Activated CD4-positive, alpha-beta memory T cell treated with anti-CD3 and anti-CD28 coated beads, Interleukin-2, amount 10 ng/mL, durations not matched to agents 7 days and 5 days (primary cell): ENCODE measurements at regions of chr13 and their contacts with region 1.

Region 1: GRCh38 chr13:46160471-46161066 is 21.4 kb downstream of the LCP1 start:
- DNase-seq: no peak
- H3K4me3 Mint-ChIP-seq: peak overlapping the region; percentile 50
- H3K27ac Mint-ChIP-seq: peak overlapping the region; percentile 80
- H3K4me1 Mint-ChIP-seq: peaks cover 70% of the 10 kb centered on the region
- H3K27me3 Mint-ChIP-seq: no peaks in the 10 kb centered on the region

Region 2: GRCh38 chr13:46143184-46143701 is 17.3 kb before region 1 on chr13:
- CTCF ChIA-PET with region 1: interaction called, 13 read pairs
- POLR2A ChIA-PET with region 1: interaction called, 68 read pairs
- DNase-seq: no peak
- H3K4me3 Mint-ChIP-seq: no peak overlapping the region
- H3K27ac Mint-ChIP-seq: peak overlapping the region; percentile 31
- H3K4me1 Mint-ChIP-seq: peaks cover 16% of the 10 kb centered on the region
- H3K27me3 Mint-ChIP-seq: no peaks in the 10 kb centered on the region

Region 3: DNA sequence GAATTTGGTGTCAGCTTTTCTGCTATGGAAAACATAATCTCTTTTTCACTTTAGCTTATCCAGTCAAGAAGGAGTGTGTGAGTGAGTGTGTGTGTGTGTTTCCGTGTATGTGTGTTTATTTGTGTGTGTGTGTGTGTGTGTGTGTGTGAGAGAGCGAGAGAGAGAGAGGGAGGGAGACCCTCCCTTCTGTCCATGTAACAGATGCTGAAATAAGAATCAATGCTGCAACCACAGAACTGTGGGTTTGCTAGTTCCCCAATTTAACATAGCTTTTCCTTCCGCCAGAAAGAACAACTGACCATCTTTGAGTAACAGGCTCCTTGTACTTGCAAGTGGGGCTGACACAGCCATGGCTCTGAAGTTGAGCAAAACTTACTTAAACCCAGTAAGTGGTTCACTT is 16.2 kb after region 1 on chr13:
- CTCF ChIA-PET with region 1: interaction called, 53 read pairs
- POLR2A ChIA-PET with region 1: interaction called, 552 read pairs
- DNase-seq: no peak
- H3K4me3 Mint-ChIP-seq: peak overlapping the region; percentile 96
- H3K27ac Mint-ChIP-seq: peak overlapping the region; percentile 68
- H3K4me1 Mint-ChIP-seq: peaks cover 66% of the 10 kb centered on the region
- H3K27me3 Mint-ChIP-seq: no peaks in the 10 kb centered on the region

Region 4: DNA sequence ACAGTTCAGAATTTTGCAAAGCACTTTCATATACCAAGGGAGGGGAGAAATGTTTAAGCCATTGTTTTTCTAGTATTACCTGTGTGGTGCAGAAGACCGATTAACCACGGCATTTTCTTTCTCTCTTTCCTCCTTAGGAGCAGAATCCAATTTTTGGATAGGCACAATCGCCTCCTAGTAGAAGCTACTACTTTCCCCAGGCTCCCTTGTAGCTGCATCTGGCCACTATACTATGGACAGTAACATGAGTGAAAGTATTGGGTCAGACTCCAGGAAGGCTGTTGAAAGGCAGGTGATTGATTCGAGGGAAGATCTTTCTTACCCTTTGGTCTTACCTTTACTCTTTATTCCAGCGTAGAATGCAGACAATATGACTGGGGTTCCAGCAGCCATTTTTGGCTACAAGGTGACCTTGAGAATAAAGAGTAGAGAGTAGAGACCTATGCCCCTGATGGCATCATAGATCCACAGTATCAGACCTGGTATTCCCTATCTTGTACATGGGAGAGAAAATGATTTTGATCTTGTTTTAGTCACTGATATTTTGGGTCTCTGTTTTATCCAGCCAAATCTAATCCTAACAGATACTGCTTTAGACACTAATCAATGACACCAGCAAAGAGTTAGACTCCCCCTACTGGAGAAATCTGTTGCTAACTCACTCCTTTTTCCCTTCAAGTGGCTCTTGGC is 128.1 kb after region 1 on chr13:
- CTCF ChIA-PET with region 1: interaction called, 18 read pairs
- POLR2A ChIA-PET with region 1: interaction called, 7 read pairs
- DNase-seq: no peak
- H3K4me3 Mint-ChIP-seq: no peak overlapping the region
- H3K27ac Mint-ChIP-seq: no peak overlapping the region
- H3K4me1 Mint-ChIP-seq: peaks cover 10% of the 10 kb centered on the region
- H3K27me3 Mint-ChIP-seq: no peaks in the 10 kb centered on the region

Region 5: GRCh38 chr13:46321494-46322225 is 161.1 kb after region 1 on chr13:
- CTCF ChIA-PET with region 1: interaction called, 14 read pairs
- POLR2A ChIA-PET with region 1: interaction called, 12 read pairs
- DNase-seq: peak; percentile 76
- H3K4me3 Mint-ChIP-seq: peak overlapping the region; percentile 46
- H3K27ac Mint-ChIP-seq: peak overlapping the region; percentile 34
- H3K4me1 Mint-ChIP-seq: peaks cover 15% of the 10 kb centered on the region
- H3K27me3 Mint-ChIP-seq: no peaks in the 10 kb centered on the region